ENCODE measurements at regions of chr17 and their contacts with region 1.

Region 1: GRCh38 chr17:78774956-78775571 is 7.0 kb downstream of the CYTH1 start:
- DNase-seq: peak; percentile 64 to 75
- ATAC-seq: peak; percentile 58 to 71 (median 68)
- H3K4me3 ChIP-seq: peak overlapping the region; percentile 28
- H3K4me3 Mint-ChIP-seq: peak overlapping the region; percentile 94
- H3K27ac ChIP-seq: peak overlapping the region; percentile 86
- H3K27ac Mint-ChIP-seq: peak overlapping the region in 1 of 2 donors; percentile 100
- H3K4me1 ChIP-seq: peaks cover 92% of the 10 kb centered on the region
- H3K4me1 Mint-ChIP-seq: peaks cover 54 to 61% of the 10 kb centered on the region in 2 donors
- H3K27me3 ChIP-seq: no peaks in the 10 kb centered on the region
- H3K27me3 Mint-ChIP-seq: no peaks in the 10 kb centered on the region
- CTCF ChIP-seq: no peak

Region 2: GRCh38 chr17:78378225-78379130 is 396.6 kb before region 1 on chr17 and contains the start of gene PGS1:
- intact Hi-C with region 1: no loop called
- DNase-seq: peak; percentile 83 to 90
- ATAC-seq: peak; percentile 73 to 86 (median 76)
- H3K4me3 ChIP-seq: peak within 1 kb of the TSS; percentile 90
- H3K4me3 Mint-ChIP-seq: peak within 1 kb of the TSS; percentile 91
- H3K27ac ChIP-seq: peak within 1 kb of the TSS; percentile 66
- H3K27ac Mint-ChIP-seq: peak within 1 kb of the TSS; percentile 84 to 95
- H3K4me1 ChIP-seq: peaks cover 41% of the 10 kb centered on the region
- H3K4me1 Mint-ChIP-seq: peaks cover 38% of the 10 kb centered on the region in 2 donors
- H3K27me3 ChIP-seq: no peaks in the 10 kb centered on the region
- H3K27me3 Mint-ChIP-seq: no peaks in the 10 kb centered on the region
- CTCF ChIP-seq: no peak
- total RNA-seq, gene PGS1: 47.9 to 53.6 (median 48.3) TPM

Region 3: GRCh38 chr17:78759203-78759968 is 15.7 kb before region 1 on chr17:
- intact Hi-C with region 1: loop called (anchors 2 kb)
- DNase-seq: peak; percentile 67 to 94
- ATAC-seq: peak; percentile 66 to 85 (median 79)
- H3K4me3 ChIP-seq: peak overlapping the region; percentile 2
- H3K4me3 Mint-ChIP-seq: peak overlapping the region; percentile 73
- H3K27ac ChIP-seq: peak overlapping the region; percentile 98
- H3K27ac Mint-ChIP-seq: peak overlapping the region; percentile 93 to 96
- H3K4me1 ChIP-seq: peaks cover 82% of the 10 kb centered on the region
- H3K4me1 Mint-ChIP-seq: peaks cover 55 to 77% of the 10 kb centered on the region in 2 donors
- H3K27me3 ChIP-seq: no peaks in the 10 kb centered on the region
- H3K27me3 Mint-ChIP-seq: no peaks in the 10 kb centered on the region
- CTCF ChIP-seq: no peak

Region 4: GRCh38 chr17:78818932-78819331 is 43.9 kb after region 1 on chr17:
- intact Hi-C with region 1: loop called (anchors 5 kb)
- DNase-seq: peak in 1 of 2 donors; percentile 89
- ATAC-seq: peak; percentile 45 to 68 (median 50)
- H3K4me3 ChIP-seq: no peak overlapping the region
- H3K4me3 Mint-ChIP-seq: peak overlapping the region; percentile 56
- H3K27ac ChIP-seq: peak overlapping the region; percentile 69
- H3K27ac Mint-ChIP-seq: peak overlapping the region; percentile 79 to 87
- H3K4me1 ChIP-seq: peaks cover 40% of the 10 kb centered on the region
- H3K4me1 Mint-ChIP-seq: peaks cover 30 to 36% of the 10 kb centered on the region in 2 donors
- H3K27me3 ChIP-seq: no peaks in the 10 kb centered on the region
- H3K27me3 Mint-ChIP-seq: no peaks in the 10 kb centered on the region
- CTCF ChIP-seq: no peak